Activated T-helper 1 cell treated with anti-CD3 and anti-CD28 coated beads, Interleukin-12 subunit alpha, Interleukin-12 subunit beta, Interleukin-2, Interleukin-4 antibody, amounts not matched to agents 30 ng/mL and 10 ng/mL and 1 ng/mL, durations not matched to agents 14 hours and 24 hours and 36 hours (primary cell): ENCODE measurements at regions of chr12 and their contacts with region 1.

Region 1: GRCh38 chr12:6267139-6267721 is 43.3 kb upstream of the PLEKHG6 start:
- DNase-seq: no peak
- H3K4me3 Mint-ChIP-seq: no peak overlapping the region
- H3K27ac Mint-ChIP-seq: peak overlapping the region; percentile 82
- H3K4me1 Mint-ChIP-seq: peaks cover 24% of the 10 kb centered on the region
- H3K27me3 Mint-ChIP-seq: peaks cover 2% of the 10 kb centered on the region

Region 2: GRCh38 chr12:6215932-6216494 is 51.2 kb before region 1 on chr12:
- intact Hi-C with region 1: loop called (anchors 1 kb)
- DNase-seq: no peak
- H3K4me3 Mint-ChIP-seq: peak overlapping the region; percentile 0
- H3K27ac Mint-ChIP-seq: peak overlapping the region; percentile 86
- H3K4me1 Mint-ChIP-seq: peaks cover 57% of the 10 kb centered on the region
- H3K27me3 Mint-ChIP-seq: peaks cover 4% of the 10 kb centered on the region

Region 3: DNA sequence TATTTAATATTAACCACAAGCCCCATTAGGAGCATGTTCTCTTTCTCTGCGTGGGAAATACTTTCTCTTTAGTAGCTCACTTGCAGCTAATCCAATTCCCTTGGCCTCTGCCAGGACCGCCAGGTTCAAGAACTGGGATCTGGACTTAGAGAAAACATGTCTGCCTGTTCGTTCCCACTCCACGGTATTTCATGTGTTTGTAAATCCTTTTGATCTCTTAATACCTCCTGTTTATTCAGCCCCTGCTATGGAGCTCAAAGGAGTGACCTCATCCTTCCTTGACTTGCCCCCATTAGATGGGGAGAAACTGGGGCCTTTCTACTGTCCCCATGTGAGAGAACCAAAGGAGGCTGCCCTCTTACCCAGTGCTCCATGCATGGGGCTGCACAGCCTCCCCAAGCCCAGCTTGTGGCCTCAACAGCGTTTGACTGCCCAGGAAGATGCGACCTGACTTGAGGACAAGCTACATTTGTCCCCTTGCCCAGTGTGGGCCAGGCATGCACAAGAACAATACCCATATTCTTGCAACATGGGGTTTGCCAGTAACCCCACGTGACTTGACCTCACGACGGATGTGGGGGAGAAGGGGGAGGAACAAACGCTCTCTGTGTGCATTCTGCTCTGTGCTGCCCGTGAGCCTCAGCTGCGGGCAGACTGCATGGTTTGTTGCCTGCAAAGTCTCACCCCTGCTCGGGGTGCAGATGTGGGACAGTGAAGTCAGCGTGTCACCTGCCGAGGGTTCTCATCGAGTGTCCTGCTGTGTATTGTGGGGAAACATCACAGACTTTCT is 36.7 kb before region 1 on chr12:
- intact Hi-C with region 1: loop called (anchors 1 kb)
- DNase-seq: peak; percentile 74
- H3K4me3 Mint-ChIP-seq: peak overlapping the region; percentile 58
- H3K27ac Mint-ChIP-seq: peak overlapping the region; percentile 92
- H3K4me1 Mint-ChIP-seq: peaks cover 20% of the 10 kb centered on the region
- H3K27me3 Mint-ChIP-seq: no peaks in the 10 kb centered on the region

Region 4: DNA sequence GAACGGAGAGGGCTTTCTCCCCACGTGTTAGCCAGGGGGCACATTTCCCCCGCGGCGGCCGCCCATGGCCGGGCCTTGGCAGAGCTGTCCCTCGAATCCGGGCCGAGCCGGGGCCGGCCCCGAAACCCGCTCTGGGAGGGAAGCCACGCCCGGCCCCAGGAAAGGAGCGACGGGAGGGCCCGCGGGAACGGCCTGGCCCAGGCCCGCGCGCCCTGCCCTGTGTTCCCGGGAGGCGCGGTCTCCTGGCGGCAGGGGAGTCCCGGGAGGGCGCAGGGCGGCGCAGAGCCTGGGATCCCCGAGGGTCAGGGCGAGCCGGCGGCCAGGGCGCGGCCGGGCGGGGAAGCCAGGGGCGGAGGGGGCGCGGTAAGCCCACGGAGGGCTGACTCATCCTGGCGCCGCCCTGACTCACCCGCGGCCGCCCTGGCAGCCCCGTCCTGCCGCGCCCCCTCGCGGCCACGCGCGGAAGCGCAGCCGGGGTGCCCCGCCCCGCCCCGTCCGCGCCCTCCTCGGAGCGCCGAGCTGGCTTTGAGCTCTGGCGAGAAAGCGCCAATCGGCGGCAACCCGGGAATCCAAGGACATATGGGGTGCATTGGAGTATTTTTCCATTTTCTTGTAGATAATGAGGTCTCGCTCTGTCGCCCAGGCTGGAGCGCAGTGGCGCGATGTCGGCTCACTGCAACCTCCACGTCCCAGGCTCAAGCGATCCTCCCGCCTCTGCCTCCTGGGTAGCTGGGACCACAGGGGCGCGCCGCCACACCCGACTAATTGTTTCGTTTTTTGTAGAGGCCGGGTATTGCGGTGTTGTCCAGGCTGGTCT is 11.4 kb after region 1 on chr12:
- intact Hi-C with region 1: loop called (anchors 1 kb)
- DNase-seq: peak; percentile 85
- H3K4me3 Mint-ChIP-seq: peak overlapping the region; percentile 83
- H3K27ac Mint-ChIP-seq: peak overlapping the region; percentile 88
- H3K4me1 Mint-ChIP-seq: peaks cover 8% of the 10 kb centered on the region
- H3K27me3 Mint-ChIP-seq: peaks cover 13% of the 10 kb centered on the region